HAP-1 (cell line): ENCODE measurements at regions of chr1 and their contacts with region 1.

Region 1: DNA sequence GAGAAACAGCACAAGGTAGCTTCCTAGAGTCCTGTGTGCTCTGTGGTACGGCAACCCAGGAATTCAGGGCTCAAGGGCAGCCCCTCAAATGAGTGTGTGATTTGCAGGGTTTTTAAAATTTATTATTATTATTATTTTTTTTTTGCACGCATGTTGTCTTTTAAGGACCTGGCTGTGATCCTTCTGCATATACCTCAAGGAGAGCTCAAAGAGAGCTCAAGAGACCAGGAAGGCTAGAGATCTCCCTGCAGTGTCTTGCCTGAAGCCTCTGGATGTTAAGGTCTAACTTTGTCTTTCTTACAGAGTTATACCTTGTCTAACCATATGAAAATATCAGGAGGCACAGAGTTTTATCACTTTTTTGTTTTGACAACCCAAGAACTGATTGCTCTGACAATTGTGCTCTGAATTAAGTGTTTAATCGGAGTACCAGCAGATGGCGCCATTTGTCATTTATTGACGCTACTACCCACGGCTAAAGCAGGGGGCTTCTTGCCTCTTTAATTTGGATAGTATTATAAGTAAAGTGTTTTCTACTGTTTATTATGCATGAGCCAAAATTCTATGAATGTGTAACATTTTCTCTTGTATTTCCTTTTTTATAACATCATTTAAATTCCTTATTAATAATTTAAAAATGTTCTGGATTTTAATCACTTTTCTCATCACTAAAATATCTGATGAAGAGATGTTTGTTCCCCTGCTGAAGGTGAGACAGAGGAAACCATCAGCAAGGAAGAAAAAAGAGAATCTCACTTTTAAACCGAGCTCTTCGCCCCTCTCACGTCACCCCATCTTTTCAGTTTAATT is 35.8 kb upstream of the LMO4 start:
- DNase-seq: peak; percentile 63 to 84
- H3K4me3 ChIP-seq: no peak overlapping the region
- H3K4me1 ChIP-seq: 0 out of 2 replicates have a peak, but pooled peaks cover 5% of the 10 kb centered on the region
- H3K27me3 ChIP-seq: no peaks in the 10 kb centered on the region

Region 2: DNA sequence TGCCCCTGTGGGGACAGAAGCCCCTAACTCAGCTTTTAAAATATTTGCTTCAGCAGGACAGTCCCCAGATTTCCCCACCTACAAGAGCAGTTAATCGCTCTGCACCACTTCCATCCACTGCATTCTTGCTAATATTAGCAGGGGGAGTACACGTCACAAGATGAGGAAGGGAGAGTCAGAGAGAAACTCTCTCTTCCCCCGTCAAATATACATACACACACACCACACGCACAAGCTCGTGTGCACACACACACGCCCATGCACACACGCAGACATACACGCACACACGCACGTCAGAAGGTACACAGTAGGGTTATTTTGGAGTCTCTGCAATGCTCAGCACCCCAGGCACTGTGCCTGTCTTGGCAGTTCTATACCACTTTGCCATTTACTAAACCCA is 822.0 kb before region 1 on chr1:
- in situ Hi-C with region 1: no loop called
- DNase-seq: no peak
- H3K4me3 ChIP-seq: no peak overlapping the region
- H3K4me1 ChIP-seq: no peaks in the 10 kb centered on the region
- H3K27me3 ChIP-seq: peaks cover 23% of the 10 kb centered on the region

Region 3: DNA sequence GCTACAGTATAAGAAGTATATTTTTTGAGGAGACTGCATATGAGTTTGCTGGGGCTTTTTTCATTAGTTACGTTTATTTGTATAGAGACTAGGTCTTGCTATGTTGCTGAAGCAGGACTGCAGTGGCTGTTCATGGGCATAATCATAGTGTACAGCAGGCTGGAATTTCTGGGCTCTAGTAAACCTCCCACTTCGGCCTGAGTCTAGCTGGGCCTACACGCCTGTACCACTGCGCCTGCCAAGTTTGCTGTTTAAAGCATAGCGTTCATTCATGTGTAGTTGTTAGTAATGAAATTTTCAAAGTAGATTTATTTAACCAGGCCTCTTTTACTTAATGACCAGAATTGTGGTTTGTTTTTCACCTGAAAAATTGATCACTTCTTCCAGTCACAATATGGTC is 344.7 kb before region 1 on chr1:
- in situ Hi-C with region 1: no loop called
- DNase-seq: no peak
- H3K4me3 ChIP-seq: no peak overlapping the region
- H3K4me1 ChIP-seq: peaks cover 20% of the 10 kb centered on the region
- H3K27me3 ChIP-seq: no peaks in the 10 kb centered on the region

Region 4: GRCh38 chr1:87953732-87954344 is 660.9 kb after region 1 on chr1:
- in situ Hi-C with region 1: loop called (anchors 25 kb)
- DNase-seq: peak; percentile 72 to 75
- H3K4me3 ChIP-seq: no peak overlapping the region
- H3K4me1 ChIP-seq: peaks cover 8% of the 10 kb centered on the region
- H3K27me3 ChIP-seq: no peaks in the 10 kb centered on the region

Region 5: DNA sequence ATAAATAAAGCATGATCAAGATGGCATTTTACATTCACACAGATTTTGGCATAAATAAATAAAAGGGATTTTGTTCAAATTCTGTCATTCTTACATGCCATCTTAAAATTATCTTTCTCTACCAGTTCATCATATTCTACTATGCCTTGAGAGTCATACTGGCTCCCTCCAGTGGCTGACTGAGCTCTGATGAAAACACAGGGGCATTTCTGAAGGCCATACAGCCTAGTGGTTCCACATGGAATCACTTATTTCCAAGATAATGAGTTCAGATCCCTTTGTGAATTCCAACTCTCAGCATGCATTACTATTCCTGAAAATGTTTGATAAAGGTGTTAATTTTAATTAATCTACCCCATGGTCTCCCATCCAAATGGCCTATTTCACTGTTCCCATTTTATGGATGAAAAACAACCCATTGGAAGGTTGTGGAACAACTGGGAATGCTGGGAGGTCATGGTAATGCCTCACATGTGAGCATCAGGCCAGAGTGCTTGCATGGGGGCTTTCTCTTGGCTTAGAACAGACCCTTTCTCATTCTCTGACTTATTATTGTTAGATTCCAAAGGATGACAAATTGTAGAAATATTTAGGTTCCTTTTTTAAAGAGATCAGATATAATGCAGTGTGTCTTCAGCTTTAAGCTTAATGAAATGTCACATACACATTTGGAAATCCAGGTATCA is 768.7 kb after region 1 on chr1:
- in situ Hi-C with region 1: loop called (anchors 25 kb)
- DNase-seq: peak; percentile 57 to 71
- H3K4me3 ChIP-seq: no peak overlapping the region
- H3K4me1 ChIP-seq: peaks cover 4% of the 10 kb centered on the region
- H3K27me3 ChIP-seq: no peaks in the 10 kb centered on the region

Region 6: DNA sequence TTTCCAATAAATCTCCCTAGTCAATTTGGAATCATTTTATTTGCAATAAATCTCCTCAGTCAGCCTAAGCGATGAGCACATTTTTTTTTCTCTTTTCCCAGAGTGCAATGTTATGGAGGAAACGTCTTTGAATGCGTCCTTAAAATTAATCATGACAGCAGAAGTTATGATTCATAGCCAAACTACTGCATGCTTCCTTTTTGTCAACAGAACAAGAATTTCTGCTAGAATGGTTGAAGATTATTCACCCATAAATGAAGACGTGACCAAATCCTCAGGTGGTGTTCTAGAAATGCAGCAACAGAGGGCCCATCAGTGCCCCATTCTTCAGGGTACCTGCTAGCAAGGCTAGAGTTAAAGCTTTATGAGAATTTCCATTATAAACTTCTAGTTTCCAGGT is 983.3 kb after region 1 on chr1:
- in situ Hi-C with region 1: loop called (anchors 25 kb)
- DNase-seq: no peak
- H3K4me3 ChIP-seq: no peak overlapping the region
- H3K4me1 ChIP-seq: peaks cover 38% of the 10 kb centered on the region
- H3K27me3 ChIP-seq: no peaks in the 10 kb centered on the region